ENCODE measurements at regions of chr5 and their contacts with region 1.

Region 1: DNA sequence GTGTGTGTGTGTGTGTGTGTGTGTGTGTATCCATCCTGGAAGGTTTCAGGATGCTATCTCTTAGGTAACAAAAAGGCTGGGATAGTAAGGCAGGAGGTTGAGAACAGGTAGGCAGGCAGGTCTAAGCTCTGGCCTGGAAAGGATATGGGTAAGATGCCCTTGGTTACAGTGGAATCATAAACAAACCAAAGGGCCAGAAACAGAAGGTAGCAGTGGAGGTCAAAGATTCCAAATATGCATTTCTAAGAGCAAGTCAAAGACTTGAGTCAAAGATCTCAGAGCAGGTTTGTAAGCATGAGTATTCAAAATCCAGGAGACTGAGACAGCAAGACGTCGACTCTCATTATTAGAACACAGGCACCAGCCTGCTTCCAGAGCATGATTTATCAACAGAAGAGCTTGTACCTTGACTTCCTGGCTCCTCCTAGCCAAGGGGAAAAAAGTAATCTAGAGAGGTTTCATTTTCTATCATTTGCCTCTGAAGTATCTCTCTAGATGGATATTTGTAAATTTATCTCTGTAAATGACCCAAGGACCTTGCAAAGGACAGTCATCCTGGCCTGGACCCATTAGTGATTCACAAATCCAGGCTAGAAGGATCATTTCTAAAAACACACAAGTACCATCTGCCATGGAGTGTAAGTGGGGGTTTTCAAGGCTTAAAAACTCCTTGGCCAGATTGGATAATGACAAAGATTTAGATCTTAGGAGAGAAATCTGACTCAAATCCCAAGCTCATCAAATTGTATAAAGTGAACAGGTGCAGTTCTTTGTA is 7.9 kb downstream of the TTC23L start:
- DNase-seq: peak in 1 of 2 experiments; percentile 21
- H3K4me3 ChIP-seq: no peak overlapping the region
- H3K27ac ChIP-seq: no peak overlapping the region
- H3K4me1 ChIP-seq: no peaks in the 10 kb centered on the region
- H3K27me3 ChIP-seq: no peaks in the 10 kb centered on the region
- CTCF ChIP-seq: no peak

Region 2: GRCh38 chr5:34511915-34512314 is 335.0 kb before region 1 on chr5:
- CTCF ChIA-PET with region 1: no interaction called
- POLR2A ChIA-PET with region 1: no interaction called
- intact Hi-C with region 1: no loop called
- DNase-seq: no peak
- H3K4me3 ChIP-seq: no peak overlapping the region
- H3K27ac ChIP-seq: peak overlapping the region; percentile 56
- H3K4me1 ChIP-seq: peaks cover 50% of the 10 kb centered on the region
- H3K27me3 ChIP-seq: no peaks in the 10 kb centered on the region
- CTCF ChIP-seq: no peak

Region 3: DNA sequence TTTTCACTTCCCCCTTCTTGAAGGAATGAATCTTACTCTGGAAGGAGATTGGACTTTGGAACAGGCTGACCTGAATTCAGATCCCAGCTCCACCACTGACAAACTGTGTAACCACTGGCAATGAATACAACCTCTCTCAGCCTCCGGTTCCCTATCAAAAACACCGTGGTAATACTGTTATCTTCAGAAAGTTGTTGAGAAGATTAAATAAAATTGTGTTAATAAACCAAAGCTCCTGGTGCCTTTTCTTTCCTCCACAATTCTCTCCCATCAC is 290.4 kb before region 1 on chr5:
- CTCF ChIA-PET with region 1: no interaction called
- POLR2A ChIA-PET with region 1: interaction called, 21 read pairs
- intact Hi-C with region 1: no loop called
- DNase-seq: no peak
- H3K4me3 ChIP-seq: no peak overlapping the region
- H3K27ac ChIP-seq: no peak overlapping the region
- H3K4me1 ChIP-seq: no peaks in the 10 kb centered on the region
- H3K27me3 ChIP-seq: no peaks in the 10 kb centered on the region
- CTCF ChIP-seq: no peak

Region 4: GRCh38 chr5:34652466-34652865 is 194.4 kb before region 1 on chr5:
- CTCF ChIA-PET with region 1: no interaction called
- POLR2A ChIA-PET with region 1: no interaction called
- intact Hi-C with region 1: no loop called
- DNase-seq: no peak
- H3K4me3 ChIP-seq: no peak overlapping the region
- H3K27ac ChIP-seq: no peak overlapping the region
- H3K4me1 ChIP-seq: peaks cover 15% of the 10 kb centered on the region
- H3K27me3 ChIP-seq: no peaks in the 10 kb centered on the region
- CTCF ChIP-seq: no peak

Region 5: DNA sequence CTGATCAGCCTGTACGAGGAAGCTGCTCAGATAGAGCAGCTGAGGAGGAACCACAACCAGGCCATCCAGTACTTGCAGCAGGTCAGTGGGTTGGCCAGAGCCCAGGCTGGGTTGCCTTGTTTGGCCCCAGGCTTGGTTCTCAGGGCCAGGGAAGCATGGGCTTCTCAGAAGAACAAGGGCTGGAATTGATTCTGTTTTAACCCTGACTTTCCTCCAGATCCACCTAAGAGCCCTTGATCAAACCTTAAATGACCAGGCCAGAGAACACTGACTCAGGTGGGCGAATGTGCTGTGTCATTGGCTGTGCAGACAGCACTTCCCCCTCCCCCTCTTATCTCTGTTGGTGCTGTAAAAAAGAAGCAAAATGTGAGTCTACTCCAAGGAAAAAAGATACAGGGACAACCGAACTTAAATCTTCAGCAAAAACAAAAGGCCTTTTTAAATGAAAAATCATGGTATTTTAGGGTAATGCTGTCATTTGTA is 20.2 kb after region 1 on chr5:
- CTCF ChIA-PET with region 1: no interaction called
- POLR2A ChIA-PET with region 1: no interaction called
- intact Hi-C with region 1: no loop called
- DNase-seq: no peak
- H3K4me3 ChIP-seq: no peak overlapping the region
- H3K27ac ChIP-seq: no peak overlapping the region
- H3K4me1 ChIP-seq: 0 out of 2 replicates have a peak, but pooled peaks cover 6% of the 10 kb centered on the region
- H3K27me3 ChIP-seq: no peaks in the 10 kb centered on the region
- CTCF ChIP-seq: no peak

Region 6: GRCh38 chr5:34905564-34905963 is 58.7 kb after region 1 on chr5:
- CTCF ChIA-PET with region 1: no interaction called
- POLR2A ChIA-PET with region 1: interaction called, 13 read pairs
- intact Hi-C with region 1: no loop called
- DNase-seq: no peak
- H3K4me3 ChIP-seq: no peak overlapping the region
- H3K27ac ChIP-seq: no peak overlapping the region
- H3K4me1 ChIP-seq: no peaks in the 10 kb centered on the region
- H3K27me3 ChIP-seq: no peaks in the 10 kb centered on the region
- CTCF ChIP-seq: peak; percentile 65

Measured in PC-9 (cell line).